ENCODE measurements at regions of chr22 and their contacts with region 1.

Region 1: DNA sequence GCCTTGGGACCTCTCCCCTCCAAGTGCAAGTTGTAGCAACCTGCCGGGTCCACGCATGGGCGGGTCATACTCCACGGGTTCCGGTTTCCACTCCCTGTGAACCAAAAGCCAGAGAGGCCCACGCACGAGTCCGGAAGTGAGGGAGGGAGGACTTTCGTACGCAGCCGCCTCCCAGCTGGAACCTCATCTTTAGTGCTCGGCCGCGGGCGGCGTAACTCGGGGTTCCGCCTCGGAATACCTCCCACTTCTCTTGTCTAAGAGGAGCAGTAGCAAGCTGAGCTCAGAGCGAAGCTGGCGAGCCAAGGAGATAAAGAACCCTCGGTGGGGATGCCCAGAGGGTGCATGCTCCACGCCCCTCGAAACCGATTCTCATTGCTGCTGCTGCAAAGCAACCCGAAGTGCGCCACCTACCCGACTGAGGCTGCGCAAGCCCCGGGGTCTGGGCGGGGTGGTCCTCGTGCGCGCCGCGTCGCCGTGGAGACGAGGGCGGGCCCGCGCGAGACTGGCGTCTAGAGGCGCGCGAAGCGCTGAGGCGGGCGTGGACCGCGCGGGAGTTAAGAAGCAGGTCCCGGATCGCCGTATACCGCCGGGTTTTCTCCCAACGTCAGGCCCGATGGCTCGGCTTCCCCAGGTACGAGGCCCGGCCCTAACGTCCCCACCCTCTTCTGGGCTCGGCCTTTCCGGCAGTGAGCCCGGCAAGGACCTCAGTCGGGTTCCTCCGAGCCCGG is at the start of gene SFI1:
- DNase-seq: peak; percentile 97
- ATAC-seq: peak; percentile 87
- H3K4me3 ChIP-seq: peak within 1 kb of the TSS; percentile 71 to 88 (median 80)
- H3K4me3 Mint-ChIP-seq: peak within 1 kb of the TSS; percentile 97
- H3K27ac ChIP-seq: peak within 1 kb of the TSS; percentile 83 to 85
- H3K27ac Mint-ChIP-seq: peak within 1 kb of the TSS; percentile 97
- H3K4me1 ChIP-seq: peaks cover 25 to 45% of the 10 kb centered on the region in 2 donors
- H3K4me1 Mint-ChIP-seq: peaks cover 39% of the 10 kb centered on the region
- H3K27me3 ChIP-seq: no peaks in the 10 kb centered on the region
- H3K27me3 Mint-ChIP-seq: no peaks in the 10 kb centered on the region
- CTCF ChIP-seq: peak; percentile 34
- total RNA-seq, gene SFI1: 182 and 191 TPM in 2 replicates

Region 2: DNA sequence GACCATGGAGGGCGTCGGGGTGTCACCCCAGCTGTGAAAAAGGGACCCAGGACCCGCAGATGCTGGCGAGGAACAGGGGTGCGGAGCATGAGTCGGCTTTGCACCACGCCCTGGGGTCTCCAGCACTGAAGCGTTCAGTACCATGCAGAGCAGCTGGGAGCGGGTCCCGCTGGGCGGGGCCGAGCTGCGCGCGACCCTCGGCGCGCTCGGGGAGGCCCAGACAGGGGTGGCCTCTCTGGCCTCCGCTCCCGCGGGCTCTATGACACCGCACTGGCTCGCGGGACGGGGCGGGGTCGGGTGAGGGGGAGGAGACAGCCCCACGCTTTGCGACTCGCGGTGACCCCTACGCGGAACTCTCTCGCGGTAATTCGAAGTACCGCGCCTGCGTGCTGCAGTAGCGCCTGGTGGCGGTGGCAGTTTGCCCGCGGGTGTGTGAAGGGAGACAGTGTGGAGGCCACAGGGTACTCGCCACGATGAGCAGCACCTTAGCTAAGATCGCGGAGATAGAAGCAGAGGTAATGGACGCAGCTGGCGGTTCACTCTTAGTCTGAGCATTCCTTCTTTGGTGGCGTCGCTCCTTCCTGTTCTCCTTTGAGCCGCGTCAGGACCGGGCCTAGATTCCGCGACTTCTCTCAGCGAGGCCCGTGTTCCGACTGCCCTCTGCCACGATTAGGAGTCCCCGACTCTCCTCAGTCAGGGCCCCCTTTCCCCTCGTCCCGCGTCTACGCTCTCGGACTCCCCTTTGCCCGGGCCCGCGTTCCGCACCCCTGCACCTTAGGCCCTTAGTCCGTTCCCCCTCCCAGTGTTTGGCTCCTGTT is 96.8 kb before region 1 on chr22 and contains the start of gene DRG1:
- CTCF ChIA-PET with region 1: interaction called, 3 read pairs
- POLR2A ChIA-PET with region 1: no interaction called
- intact Hi-C with region 1: loop called (anchors 1 kb)
- DNase-seq: peak; percentile 95
- ATAC-seq: peak; percentile 99
- H3K4me3 ChIP-seq: peak within 1 kb of the TSS; percentile 79 to 88 (median 85)
- H3K4me3 Mint-ChIP-seq: peak within 1 kb of the TSS; percentile 98
- H3K27ac ChIP-seq: peak within 1 kb of the TSS; percentile 60 to 89
- H3K27ac Mint-ChIP-seq: peak within 1 kb of the TSS; percentile 95
- H3K4me1 ChIP-seq: peaks cover 13 to 17% of the 10 kb centered on the region in 2 donors
- H3K4me1 Mint-ChIP-seq: peaks cover 21% of the 10 kb centered on the region
- H3K27me3 ChIP-seq: no peaks in the 10 kb centered on the region
- H3K27me3 Mint-ChIP-seq: peaks cover 2% of the 10 kb centered on the region
- CTCF ChIP-seq: no peak
- total RNA-seq, gene DRG1: 58.9 and 77.7 TPM in 2 replicates

Region 3: GRCh38 chr22:31451709-31452571 is 44.2 kb before region 1 on chr22:
- CTCF ChIA-PET with region 1: interaction called, 8 read pairs
- POLR2A ChIA-PET with region 1: no interaction called
- intact Hi-C with region 1: loop called (anchors 5 kb)
- DNase-seq: peak; percentile 54
- ATAC-seq: peak; percentile 49
- H3K4me3 ChIP-seq: no peak overlapping the region
- H3K4me3 Mint-ChIP-seq: no peak overlapping the region
- H3K27ac ChIP-seq: no peak overlapping the region
- H3K27ac Mint-ChIP-seq: no peak overlapping the region
- H3K4me1 ChIP-seq: peaks cover 8 to 11% of the 10 kb centered on the region in 2 donors
- H3K4me1 Mint-ChIP-seq: peaks cover 19% of the 10 kb centered on the region
- H3K27me3 ChIP-seq: no peaks in the 10 kb centered on the region
- H3K27me3 Mint-ChIP-seq: no peaks in the 10 kb centered on the region
- CTCF ChIP-seq: peak; percentile 56

Region 4: DNA sequence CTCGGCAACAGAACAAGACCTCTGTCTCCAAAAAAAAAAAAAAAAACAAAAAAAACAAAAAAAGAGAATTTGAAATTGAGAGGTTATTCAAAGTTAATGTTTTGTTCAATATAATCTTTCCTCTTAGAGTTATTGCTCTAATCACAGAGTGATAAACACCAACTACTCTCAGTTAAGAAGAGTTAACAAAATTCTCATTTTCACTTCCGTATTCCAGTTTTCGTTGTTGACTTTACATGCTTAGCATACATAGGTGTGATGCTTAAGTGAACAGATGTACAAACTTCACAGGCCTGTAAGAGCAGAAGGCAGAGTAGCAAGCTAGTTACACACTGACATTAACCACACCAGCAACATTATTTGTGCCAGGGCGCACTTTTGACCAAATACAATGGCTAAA is 18.8 kb before region 1 on chr22:
- CTCF ChIA-PET with region 1: no interaction called
- POLR2A ChIA-PET with region 1: no interaction called
- intact Hi-C with region 1: loop called (anchors 2 kb)
- DNase-seq: peak; percentile 64
- ATAC-seq: peak; percentile 90
- H3K4me3 ChIP-seq: no peak overlapping the region
- H3K4me3 Mint-ChIP-seq: peak overlapping the region; percentile 44
- H3K27ac ChIP-seq: peak overlapping the region; percentile 17 to 52
- H3K27ac Mint-ChIP-seq: peak overlapping the region; percentile 79
- H3K4me1 ChIP-seq: peaks cover 13 to 17% of the 10 kb centered on the region in 2 donors
- H3K4me1 Mint-ChIP-seq: peaks cover 19% of the 10 kb centered on the region
- H3K27me3 ChIP-seq: no peaks in the 10 kb centered on the region
- H3K27me3 Mint-ChIP-seq: no peaks in the 10 kb centered on the region
- CTCF ChIP-seq: no peak